ENCODE measurements at regions of chr2 and their contacts with region 1.

Region 1: GRCh38 chr2:42810121-42810970 is 18.0 kb upstream of the HAAO start:
- DNase-seq: peak; percentile 85 to 98 (median 94)
- H3K4me3 ChIP-seq: peak overlapping the region; percentile 79
- H3K4me3 Mint-ChIP-seq: peak overlapping the region; percentile 89 to 98 (median 94)
- H3K27ac ChIP-seq: peak overlapping the region; percentile 86
- H3K27ac Mint-ChIP-seq: peak overlapping the region; percentile 97 to 99 (median 98)
- H3K4me1 ChIP-seq: peaks cover 4% of the 10 kb centered on the region
- H3K4me1 Mint-ChIP-seq: peaks cover 17 to 28% (median 25%) of the 10 kb centered on the region in 3 donors
- H3K27me3 ChIP-seq: no peaks in the 10 kb centered on the region
- H3K27me3 Mint-ChIP-seq: peaks cover 0 to 6% of the 10 kb centered on the region in 2 donors

Region 2: GRCh38 chr2:42828487-42829425 is 18.4 kb after region 1 on chr2:
- CTCF ChIA-PET with region 1: interaction called, 25 read pairs
- POLR2A ChIA-PET with region 1: interaction called, 5 read pairs
- DNase-seq: peak; percentile 51 to 77 (median 59)
- H3K4me3 ChIP-seq: no peak overlapping the region
- H3K4me3 Mint-ChIP-seq: peak overlapping the region in 2 of 7 donors; percentile 23 to 46
- H3K27ac ChIP-seq: no peak overlapping the region
- H3K27ac Mint-ChIP-seq: peak overlapping the region in 2 of 8 donors; percentile 7 to 65
- H3K4me1 ChIP-seq: peaks cover 8% of the 10 kb centered on the region
- H3K4me1 Mint-ChIP-seq: peaks cover 13 to 21% (median 19%) of the 10 kb centered on the region in 3 donors
- H3K27me3 ChIP-seq: no peaks in the 10 kb centered on the region
- H3K27me3 Mint-ChIP-seq: peaks cover 5 to 14% of the 10 kb centered on the region in 2 donors

Region 3: GRCh38 chr2:43595603-43596412 is 785.5 kb after region 1 on chr2 and contains the start of gene THADA:
- CTCF ChIA-PET with region 1: no interaction called
- POLR2A ChIA-PET with region 1: interaction called, 22 read pairs
- DNase-seq: peak; percentile 92 to 98 (median 95)
- H3K4me3 ChIP-seq: peak within 1 kb of the TSS; percentile 94
- H3K4me3 Mint-ChIP-seq: peak within 1 kb of the TSS; percentile 93 to 97 (median 96)
- H3K27ac ChIP-seq: peak within 1 kb of the TSS; percentile 83
- H3K27ac Mint-ChIP-seq: peak within 1 kb of the TSS; percentile 97 to 99 (median 98)
- H3K4me1 ChIP-seq: peaks cover 13% of the 10 kb centered on the region
- H3K4me1 Mint-ChIP-seq: peaks cover 31 to 48% (median 41%) of the 10 kb centered on the region in 3 donors
- H3K27me3 ChIP-seq: no peaks in the 10 kb centered on the region
- H3K27me3 Mint-ChIP-seq: peaks cover 7 to 11% of the 10 kb centered on the region in 2 donors
- total RNA-seq, gene THADA: 45.8 to 48.7 TPM